ENCODE measurements at regions of chr22 and their contacts with region 1.

Region 1: GRCh38 chr22:30667494-30668385 is at the start of gene DUSP18:
- DNase-seq: peak; percentile 94
- H3K4me3 Mint-ChIP-seq: peak within 1 kb of the TSS; percentile 98
- H3K27ac Mint-ChIP-seq: peak within 1 kb of the TSS; percentile 22
- H3K4me1 Mint-ChIP-seq: peaks cover 17% of the 10 kb centered on the region
- H3K27me3 Mint-ChIP-seq: no peaks in the 10 kb centered on the region
- total RNA-seq, gene DUSP18: 4.7 to 5.6 TPM

Region 2: DNA sequence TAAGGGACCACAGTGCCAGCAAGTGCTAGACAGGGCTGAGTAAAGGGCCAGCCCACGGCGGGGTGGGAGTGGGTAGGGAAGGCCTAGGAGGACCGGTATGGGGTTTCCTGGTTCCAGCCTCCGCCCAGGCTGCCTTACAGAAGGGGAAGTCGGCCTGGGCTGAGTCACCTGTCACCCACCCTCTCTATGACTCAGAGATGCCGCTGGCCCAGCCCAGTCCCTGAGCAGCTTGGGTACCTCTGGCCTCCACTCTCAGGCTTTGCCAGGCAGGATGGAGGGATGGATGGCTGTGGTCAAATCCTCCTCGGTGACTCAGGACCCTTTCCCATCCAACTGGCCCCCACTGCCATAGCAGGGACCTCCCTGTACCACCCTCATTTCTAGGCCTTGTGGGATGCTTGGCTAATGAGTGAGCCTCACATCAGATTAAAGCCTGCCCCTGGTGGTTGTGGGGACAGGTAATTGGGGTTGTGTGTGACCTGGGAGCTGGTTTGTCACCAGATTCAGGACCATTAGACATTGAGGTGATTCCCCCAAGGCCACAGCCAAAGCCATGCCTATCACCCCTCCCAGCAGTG is 18.2 kb before region 1 on chr22:
- CTCF ChIA-PET with region 1: interaction called, 3 read pairs
- intact Hi-C with region 1: loop called (anchors 1 kb)
- DNase-seq: peak; percentile 95
- H3K4me3 Mint-ChIP-seq: no peak overlapping the region
- H3K27ac Mint-ChIP-seq: peak overlapping the region; percentile 75
- H3K4me1 Mint-ChIP-seq: peaks cover 28% of the 10 kb centered on the region
- H3K27me3 Mint-ChIP-seq: no peaks in the 10 kb centered on the region

Region 3: GRCh38 chr22:30694171-30694639 is 26.5 kb after region 1 on chr22:
- CTCF ChIA-PET with region 1: no interaction called
- intact Hi-C with region 1: loop called (anchors 2 kb)
- DNase-seq: peak; percentile 64
- H3K4me3 Mint-ChIP-seq: peak overlapping the region; percentile 87
- H3K27ac Mint-ChIP-seq: no peak overlapping the region
- H3K4me1 Mint-ChIP-seq: peaks cover 11% of the 10 kb centered on the region
- H3K27me3 Mint-ChIP-seq: peaks cover 12% of the 10 kb centered on the region

Region 4: DNA sequence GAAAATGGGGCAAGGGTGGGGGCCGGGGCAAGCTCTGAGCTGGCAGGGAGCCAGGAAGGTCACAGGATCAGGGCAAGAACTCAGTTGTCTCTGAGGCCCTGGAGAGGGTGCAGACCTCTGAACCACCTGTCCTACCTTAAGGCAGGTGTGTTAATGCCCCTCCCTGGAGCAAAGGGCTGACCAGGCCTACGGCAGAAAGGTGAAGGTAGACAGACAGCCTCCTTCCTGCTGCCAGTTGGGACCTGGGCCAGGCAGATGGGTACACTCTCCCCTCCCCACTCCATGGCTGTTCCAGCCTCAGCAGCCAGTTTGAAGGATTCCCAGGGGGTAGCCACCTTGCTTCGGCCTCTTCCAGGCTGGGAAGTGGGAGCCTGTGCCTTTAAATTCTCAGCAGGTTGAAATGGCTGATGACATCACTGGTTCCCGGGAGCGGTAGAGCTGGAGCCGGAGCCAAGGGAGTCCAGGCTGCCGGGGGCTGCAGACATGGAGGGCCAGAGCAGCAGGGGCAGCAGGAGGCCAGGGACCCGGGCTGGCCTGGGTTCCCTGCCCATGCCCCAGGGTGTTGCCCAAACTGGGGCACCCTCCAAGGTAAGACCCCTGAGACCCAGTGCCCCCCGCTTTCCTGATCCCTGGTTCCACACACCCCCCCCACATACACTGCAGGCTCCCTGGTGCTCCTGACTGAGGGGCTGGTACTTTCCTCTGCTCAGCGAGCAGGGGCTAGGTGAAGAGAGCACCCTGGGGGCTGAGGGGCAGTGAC is 455.0 kb after region 1 on chr22 and contains the start of gene INPP5J:
- CTCF ChIA-PET with region 1: no interaction called
- intact Hi-C with region 1: no loop called
- DNase-seq: no peak
- H3K4me3 Mint-ChIP-seq: no peak within 1 kb of the TSS
- H3K27ac Mint-ChIP-seq: no peak within 1 kb of the TSS
- H3K4me1 Mint-ChIP-seq: no peaks in the 10 kb centered on the region
- H3K27me3 Mint-ChIP-seq: no peaks in the 10 kb centered on the region
- total RNA-seq, gene INPP5J: 0.12 to 0.17 TPM